Posterior cingulate gyrus (tissue), 11 donors: ENCODE measurements at regions of chr1 and their contacts with region 1.

Region 1: DNA sequence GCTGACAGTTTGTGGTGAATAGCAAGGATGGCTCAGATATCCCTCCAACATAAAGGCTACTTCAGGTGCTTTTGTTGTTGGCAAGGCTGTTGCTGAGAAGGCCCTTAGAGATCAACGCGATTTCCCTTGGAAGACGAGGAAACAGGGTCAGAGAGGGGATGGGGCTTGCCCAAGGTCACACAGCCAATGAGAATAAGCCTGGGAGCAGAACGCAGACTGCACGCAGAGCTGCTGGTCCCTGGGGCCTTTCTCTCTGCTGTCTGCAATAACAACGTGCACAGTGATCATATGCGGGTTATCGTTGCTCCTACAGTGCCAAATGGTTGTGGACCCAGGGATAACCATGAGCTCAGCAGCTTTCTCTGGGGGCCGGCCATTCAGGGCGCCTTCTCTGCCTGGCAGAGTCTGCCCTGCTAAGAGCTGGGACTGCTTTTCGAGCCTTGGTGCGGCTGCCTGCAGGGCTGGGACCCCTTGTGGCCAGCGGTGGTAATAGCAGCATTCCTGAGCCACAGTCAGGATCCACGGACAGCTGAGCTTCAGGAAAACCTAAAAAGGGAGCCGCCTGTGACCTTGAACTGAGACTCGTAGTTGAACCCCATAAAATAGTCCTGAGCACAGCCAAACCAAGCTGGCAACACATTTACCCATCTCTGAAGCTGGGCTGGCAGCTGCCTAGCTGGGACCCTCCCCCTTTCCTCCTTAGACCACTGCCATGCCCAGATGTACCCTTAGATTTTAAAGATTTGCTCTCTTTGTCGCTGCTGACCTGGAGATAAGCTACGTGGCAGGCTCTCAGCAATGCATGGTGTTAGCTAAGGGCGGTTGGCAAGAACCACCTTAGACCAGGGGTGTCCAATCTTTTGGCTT is 39.8 kb downstream of the HTR6 start:
- DNase-seq: peak; percentile 70 to 97 (median 84)

Region 2: DNA sequence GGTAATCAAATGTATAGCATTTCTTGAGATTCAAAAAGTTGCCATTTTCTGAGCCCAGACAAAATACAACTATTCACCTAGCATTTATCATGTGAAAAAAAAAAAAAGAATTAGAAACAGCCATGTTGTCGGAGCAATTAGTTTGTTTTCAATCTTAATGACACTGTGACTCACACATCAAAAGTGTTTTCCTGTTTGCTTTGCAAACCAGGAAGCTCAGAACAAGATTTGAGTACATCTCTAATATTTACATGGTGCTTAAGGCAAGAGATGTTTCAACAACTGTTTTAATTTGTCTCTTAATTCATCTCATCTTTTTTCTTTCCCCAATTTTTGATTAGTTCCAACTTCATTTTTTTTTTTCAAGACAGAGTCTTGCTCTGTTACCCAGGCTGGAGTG is 156.7 kb before region 1 on chr1:
- intact Hi-C with region 1: no loop called
- DNase-seq: no peak

Region 3: DNA sequence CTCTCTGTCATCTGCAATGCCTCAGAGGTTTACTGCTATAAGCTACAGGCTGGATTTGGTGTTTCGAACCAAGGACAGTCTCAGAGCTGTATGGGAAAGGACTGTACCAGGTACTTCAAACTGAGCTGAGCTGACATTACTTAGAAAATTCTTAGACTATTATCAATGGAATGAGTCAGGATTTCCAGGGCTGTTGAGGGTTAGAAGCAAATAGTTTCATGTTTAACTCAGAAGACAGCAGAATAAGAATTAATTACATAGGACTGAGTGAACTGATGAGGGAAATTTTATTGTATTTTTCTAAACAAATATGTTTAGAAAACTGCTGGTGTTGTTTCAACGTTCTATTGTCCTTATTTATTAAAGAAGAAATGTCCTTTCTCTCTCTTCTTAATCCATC is 144.8 kb before region 1 on chr1:
- intact Hi-C with region 1: no loop called
- DNase-seq: no peak

Region 4: DNA sequence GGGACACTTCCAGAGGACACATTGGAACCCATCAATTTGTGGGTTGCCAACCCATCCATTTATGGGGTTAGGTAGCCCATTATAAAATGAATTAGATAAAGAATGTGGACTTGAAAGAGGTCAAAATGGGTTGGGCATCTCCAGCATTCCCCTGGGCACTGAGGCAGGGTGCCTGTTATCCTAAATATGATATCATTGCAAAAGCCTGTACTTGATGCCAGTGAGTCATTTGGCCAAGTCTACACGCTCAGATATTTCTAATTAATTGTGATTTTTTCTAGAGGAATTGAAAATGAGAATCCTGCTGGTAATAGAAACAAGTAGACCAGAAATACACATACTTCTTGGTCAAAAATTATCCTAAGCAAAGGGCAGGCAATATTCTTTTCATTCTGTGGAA is 82.3 kb before region 1 on chr1:
- intact Hi-C with region 1: no loop called
- DNase-seq: no peak

Region 5: GRCh38 chr1:19661721-19662228 is 42.7 kb before region 1 on chr1:
- intact Hi-C with region 1: loop called (anchors 1 kb)
- DNase-seq: no peak